Activated CD4-positive, alpha-beta T cell treated with anti-CD3 and anti-CD28 coated beads for 36 hours (primary cell): ENCODE measurements at regions of chr5 and their contacts with region 1.

Region 1: GRCh38 chr5:40404613-40405012 is 275.1 kb upstream of the PTGER4 start:
- DNase-seq: no peak
- ATAC-seq: peak; percentile 28
- H3K4me3 Mint-ChIP-seq: peak overlapping the region; percentile 18
- H3K27ac Mint-ChIP-seq: peak overlapping the region; percentile 99
- H3K4me1 Mint-ChIP-seq: peaks cover 94% of the 10 kb centered on the region
- H3K27me3 Mint-ChIP-seq: no peaks in the 10 kb centered on the region

Region 2: DNA sequence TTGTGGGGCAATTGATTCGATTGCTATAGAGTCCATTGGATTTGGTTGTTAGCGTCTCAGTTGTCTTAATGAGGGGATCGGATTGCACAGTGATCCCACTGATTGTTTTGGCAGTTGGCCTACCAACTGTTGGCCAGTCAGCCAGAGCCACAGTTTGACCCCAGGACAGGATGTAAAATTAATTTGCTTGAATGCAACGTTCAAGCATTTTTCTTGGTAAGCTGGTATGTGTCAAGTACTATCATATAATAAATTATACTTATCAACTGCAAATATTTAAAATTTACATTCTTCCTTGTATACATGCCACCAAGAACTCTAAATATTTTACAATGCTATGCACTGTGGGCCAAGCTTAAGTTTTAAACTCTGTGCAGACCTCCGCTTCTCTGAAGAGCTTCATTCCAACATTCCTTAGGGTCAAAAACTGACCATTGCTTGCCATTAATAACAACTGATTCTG is 1639.2 kb before region 1 on chr5:
- CTCF ChIA-PET with region 1: no interaction called
- POLR2A ChIA-PET with region 1: no interaction called
- intact Hi-C with region 1: no loop called
- DNase-seq: no peak
- ATAC-seq: no peak
- H3K4me3 Mint-ChIP-seq: no peak overlapping the region
- H3K27ac Mint-ChIP-seq: no peak overlapping the region
- H3K4me1 Mint-ChIP-seq: no peaks in the 10 kb centered on the region
- H3K27me3 Mint-ChIP-seq: peaks cover 7% of the 10 kb centered on the region

Region 3: DNA sequence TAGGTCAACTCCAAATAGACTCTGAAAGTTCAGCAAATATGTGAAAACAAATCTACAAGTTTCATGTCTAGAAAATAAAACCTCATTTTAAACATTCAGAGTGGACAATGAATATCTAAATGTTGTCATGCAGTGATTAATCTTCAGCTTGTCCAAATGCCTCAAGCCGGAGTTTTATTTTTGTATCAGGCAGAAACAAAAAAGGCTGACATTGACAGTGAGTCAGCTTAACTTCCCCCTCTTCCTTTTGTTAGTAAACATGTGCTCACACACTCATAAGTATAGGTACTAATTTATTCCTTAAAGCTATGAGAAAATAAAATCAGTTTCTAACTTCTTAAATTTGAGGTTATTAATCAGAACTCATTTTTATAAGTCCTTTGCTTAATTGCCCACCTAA is 511.9 kb before region 1 on chr5:
- CTCF ChIA-PET with region 1: no interaction called
- POLR2A ChIA-PET with region 1: no interaction called
- intact Hi-C with region 1: no loop called
- DNase-seq: no peak
- ATAC-seq: no peak
- H3K4me3 Mint-ChIP-seq: no peak overlapping the region
- H3K27ac Mint-ChIP-seq: no peak overlapping the region
- H3K4me1 Mint-ChIP-seq: no peaks in the 10 kb centered on the region
- H3K27me3 Mint-ChIP-seq: peaks cover 8% of the 10 kb centered on the region

Region 4: GRCh38 chr5:40266952-40267351 is 137.7 kb before region 1 on chr5:
- CTCF ChIA-PET with region 1: no interaction called
- POLR2A ChIA-PET with region 1: no interaction called
- intact Hi-C with region 1: no loop called
- DNase-seq: no peak
- ATAC-seq: no peak
- H3K4me3 Mint-ChIP-seq: no peak overlapping the region
- H3K27ac Mint-ChIP-seq: no peak overlapping the region
- H3K4me1 Mint-ChIP-seq: peaks cover 25% of the 10 kb centered on the region
- H3K27me3 Mint-ChIP-seq: no peaks in the 10 kb centered on the region

Region 5: DNA sequence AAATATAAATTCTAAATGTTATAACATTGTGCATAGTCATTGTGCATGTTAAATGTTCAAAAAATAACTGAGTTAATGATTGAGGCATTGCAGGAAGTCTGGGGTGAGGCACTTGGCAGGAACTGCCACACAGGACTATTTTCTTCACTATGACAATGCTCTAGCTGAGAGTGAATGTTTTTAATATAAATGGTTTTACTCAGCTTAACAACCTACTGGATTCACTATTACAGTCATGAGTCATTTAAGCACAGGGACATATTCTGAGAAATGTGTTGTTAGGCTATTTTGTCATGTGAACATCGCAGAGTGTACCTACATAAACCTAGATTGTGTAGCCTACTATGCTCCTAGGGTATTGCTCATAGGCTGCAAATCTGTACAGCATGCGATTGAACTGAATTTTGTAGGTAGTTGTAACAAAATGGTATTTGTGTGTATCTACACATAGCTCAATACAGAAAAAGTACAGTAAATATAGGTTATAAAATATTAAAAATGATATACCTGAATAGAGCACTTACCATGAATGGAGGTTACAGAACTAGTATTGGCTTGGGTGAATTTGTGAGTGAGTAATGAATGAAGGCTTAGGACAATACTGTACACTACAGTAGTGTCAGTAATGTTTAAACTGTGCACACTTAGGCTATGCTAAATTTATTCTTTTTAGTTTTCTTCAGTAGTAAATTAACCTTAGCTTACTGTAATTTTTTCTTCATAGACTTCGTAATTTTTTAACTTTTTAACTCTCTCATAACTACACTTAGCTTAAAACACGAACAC is 71.0 kb before region 1 on chr5:
- CTCF ChIA-PET with region 1: interaction called, 4 read pairs
- POLR2A ChIA-PET with region 1: interaction called, 5 read pairs
- intact Hi-C with region 1: loop called in 1 of 2 experiments (anchors 1 kb)
- DNase-seq: peak; percentile 49
- ATAC-seq: peak; percentile 96
- H3K4me3 Mint-ChIP-seq: no peak overlapping the region
- H3K27ac Mint-ChIP-seq: no peak overlapping the region
- H3K4me1 Mint-ChIP-seq: peaks cover 41% of the 10 kb centered on the region
- H3K27me3 Mint-ChIP-seq: no peaks in the 10 kb centered on the region

Region 6: GRCh38 chr5:40391642-40392041 is 13.0 kb before region 1 on chr5:
- CTCF ChIA-PET with region 1: interaction called, 18 read pairs
- POLR2A ChIA-PET with region 1: no interaction called
- intact Hi-C with region 1: no loop called
- DNase-seq: no peak
- ATAC-seq: peak; percentile 60
- H3K4me3 Mint-ChIP-seq: no peak overlapping the region
- H3K27ac Mint-ChIP-seq: no peak overlapping the region
- H3K4me1 Mint-ChIP-seq: peaks cover 44% of the 10 kb centered on the region
- H3K27me3 Mint-ChIP-seq: no peaks in the 10 kb centered on the region

Region 7: DNA sequence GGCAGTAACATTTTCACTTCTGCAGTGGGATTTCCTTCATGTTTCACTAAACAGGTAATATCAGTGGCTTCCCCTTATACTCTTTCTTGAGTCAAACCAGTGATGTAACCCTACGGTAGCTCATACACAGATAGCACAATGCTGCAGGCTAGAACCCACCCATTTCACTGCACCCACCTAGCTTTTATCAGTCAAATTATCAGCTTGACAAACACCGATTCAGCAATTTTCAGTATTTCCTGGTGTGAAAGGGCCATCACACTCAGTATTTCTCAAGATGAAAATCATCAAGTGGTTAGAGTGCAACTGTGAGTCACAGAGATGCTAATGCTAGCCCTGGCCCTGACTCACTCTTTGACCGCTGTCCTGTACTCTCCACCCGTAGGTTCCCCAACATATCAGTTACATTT is 32.8 kb after region 1 on chr5:
- CTCF ChIA-PET with region 1: interaction called, 6 read pairs
- POLR2A ChIA-PET with region 1: interaction called, 3 read pairs
- intact Hi-C with region 1: loop called in 1 of 2 experiments (anchors 5 kb)
- DNase-seq: peak; percentile 55
- ATAC-seq: peak; percentile 61
- H3K4me3 Mint-ChIP-seq: no peak overlapping the region
- H3K27ac Mint-ChIP-seq: peak overlapping the region; percentile 61
- H3K4me1 Mint-ChIP-seq: peaks cover 80% of the 10 kb centered on the region
- H3K27me3 Mint-ChIP-seq: no peaks in the 10 kb centered on the region

Region 8: DNA sequence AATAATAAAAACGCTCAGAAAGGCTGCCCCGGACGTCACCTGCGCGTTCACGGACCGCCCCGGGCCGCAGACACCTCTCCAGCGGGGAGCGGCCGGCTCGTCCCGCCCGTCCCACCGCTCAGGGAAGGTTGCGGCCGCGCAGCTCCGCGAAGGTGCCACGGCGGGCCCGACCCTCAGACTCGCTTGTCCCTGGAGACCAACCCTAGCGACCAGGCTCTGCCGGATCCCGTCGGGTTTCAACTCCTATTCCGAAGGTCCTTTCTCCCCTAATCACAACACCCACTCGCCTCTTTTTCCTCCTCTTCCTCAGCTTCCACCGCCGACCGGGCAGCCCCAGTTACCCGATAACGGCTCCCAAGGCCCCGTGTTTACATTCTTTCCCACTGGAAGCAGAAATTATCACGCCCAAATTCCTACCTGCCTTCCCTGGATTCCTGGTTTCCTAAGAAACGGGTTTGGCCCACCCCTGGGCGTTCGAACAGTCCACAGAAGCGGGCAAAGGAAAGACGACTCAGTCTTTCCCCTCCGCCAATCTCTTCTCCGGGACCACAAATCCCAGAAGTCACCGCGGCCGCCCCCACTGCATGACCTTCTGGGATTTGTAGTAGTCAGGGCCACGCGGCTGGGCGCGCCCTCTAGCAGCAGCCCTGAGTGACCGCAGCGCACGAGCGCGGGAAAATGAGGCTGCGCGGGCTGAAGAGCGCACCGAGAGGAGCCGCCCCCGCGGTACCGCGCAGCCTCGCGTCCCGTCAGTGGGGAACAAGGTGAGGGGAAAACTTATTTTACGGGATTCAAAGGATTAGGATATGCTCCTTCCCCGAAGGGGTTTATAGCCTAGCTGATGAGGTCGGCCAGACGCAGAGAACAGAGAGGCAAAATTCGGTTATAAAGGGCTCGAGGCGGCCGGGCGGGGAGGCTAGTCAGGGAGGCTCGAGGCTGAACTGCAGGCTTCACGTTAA is 351.1 kb after region 1 on chr5 and contains the start of gene TTC33:
- CTCF ChIA-PET with region 1: no interaction called
- POLR2A ChIA-PET with region 1: no interaction called
- intact Hi-C with region 1: loop called in 1 of 2 experiments (anchors 10 kb)
- DNase-seq: peak; percentile 99
- ATAC-seq: peak; percentile 90
- H3K4me3 Mint-ChIP-seq: no peak within 1 kb of the TSS
- H3K27ac Mint-ChIP-seq: no peak within 1 kb of the TSS
- H3K4me1 Mint-ChIP-seq: peaks cover 21% of the 10 kb centered on the region
- H3K27me3 Mint-ChIP-seq: no peaks in the 10 kb centered on the region
- total RNA-seq, gene TTC33: 31.4 to 31.7 TPM